ENCODE measurements at regions of chr9 and their contacts with region 1.

Region 1: DNA sequence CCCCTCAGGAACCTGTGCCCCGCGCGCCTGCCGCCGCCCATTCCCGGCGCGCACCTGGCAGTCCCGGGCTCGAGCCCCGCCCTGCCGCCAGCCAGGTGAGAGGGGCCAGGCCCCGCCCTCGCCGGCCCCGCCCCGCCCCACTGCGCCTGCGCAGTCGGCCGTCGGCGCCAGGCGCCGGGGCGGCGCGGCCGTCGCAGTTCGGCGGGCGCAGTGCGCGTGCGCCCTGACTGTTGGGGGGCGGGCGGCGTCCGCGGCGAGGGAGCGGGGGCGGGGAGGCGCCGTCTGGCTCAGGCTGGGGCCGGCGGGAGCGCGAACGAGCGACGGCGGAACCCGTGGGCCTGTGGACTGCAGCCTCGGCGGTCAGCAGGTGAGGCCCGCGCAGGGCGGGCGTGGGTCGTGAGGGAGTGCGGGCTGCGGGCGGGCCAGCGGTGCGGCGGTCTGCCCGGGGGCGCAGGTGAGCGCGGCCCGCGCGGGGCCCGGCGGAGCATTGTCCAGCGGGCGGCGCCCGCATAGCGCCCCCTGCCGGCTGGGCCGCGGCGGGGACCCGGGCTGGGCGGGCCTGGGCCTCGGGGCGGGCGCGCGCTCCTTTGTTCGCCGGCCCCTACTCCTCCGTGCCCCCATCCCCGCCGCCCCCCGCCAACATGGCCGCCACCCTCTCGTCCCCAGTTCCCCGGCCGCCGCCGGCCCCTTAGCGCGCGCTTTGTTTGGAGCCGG is at the start of gene SPIN1:
- DNase-seq: peak; percentile 88
- H3K4me3 ChIP-seq: peak within 1 kb of the TSS; percentile 54 to 97 (median 96)
- H3K27ac ChIP-seq: peak within 1 kb of the TSS; percentile 87 to 96 (median 95)
- H3K4me1 ChIP-seq: peaks cover 0 to 38% (median 28%) of the 10 kb centered on the region in 4 donors
- H3K27me3 ChIP-seq: no peaks in the 10 kb centered on the region
- CTCF ChIP-seq: peak in 1 of 4 experiments; percentile 46
- EP300 ChIP-seq: no peak
- POLR2A ChIP-seq: no peak
- total RNA-seq, gene SPIN1: 79.2 to 102 (median 83.1) TPM

Region 2: DNA sequence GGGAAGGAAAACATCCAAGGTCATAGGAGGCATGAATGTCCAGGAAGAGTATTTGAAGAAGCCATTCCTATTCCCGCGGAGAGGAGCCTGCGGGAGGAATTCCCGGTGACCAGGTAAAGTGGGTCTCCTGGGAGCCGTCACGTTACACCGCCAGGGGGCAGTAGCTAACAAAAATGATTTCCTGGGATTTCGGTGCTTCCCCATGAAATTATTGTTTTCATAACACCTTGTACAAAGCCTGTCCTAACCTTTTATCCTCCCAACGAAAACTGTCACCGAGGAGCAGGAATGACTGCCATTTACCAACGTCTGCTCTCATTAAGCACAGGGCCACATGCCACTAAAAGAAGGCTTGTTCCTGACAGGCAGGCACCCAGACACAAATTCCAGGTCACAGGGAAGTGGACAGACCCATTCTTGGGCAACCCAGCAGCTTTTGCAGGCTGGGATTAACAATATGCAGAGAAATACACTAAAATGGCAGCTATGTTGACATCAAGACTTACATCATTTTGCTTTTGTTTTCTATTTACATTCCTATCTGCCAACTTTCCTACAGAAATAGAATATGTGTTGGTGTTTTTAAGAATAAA is 703.6 kb before region 1 on chr9:
- intact Hi-C with region 1: loop called (anchors 5 kb)
- DNase-seq: no peak
- H3K4me3 ChIP-seq: no peak overlapping the region
- H3K27ac ChIP-seq: peak overlapping the region in 2 of 4 donors; percentile 59 to 66
- H3K4me1 ChIP-seq: peaks cover 0 to 34% (median 29%) of the 10 kb centered on the region in 4 donors
- H3K27me3 ChIP-seq: no peaks in the 10 kb centered on the region
- CTCF ChIP-seq: peak; percentile 24 to 73 (median 60)
- EP300 ChIP-seq: no peak
- POLR2A ChIP-seq: no peak

Region 3: DNA sequence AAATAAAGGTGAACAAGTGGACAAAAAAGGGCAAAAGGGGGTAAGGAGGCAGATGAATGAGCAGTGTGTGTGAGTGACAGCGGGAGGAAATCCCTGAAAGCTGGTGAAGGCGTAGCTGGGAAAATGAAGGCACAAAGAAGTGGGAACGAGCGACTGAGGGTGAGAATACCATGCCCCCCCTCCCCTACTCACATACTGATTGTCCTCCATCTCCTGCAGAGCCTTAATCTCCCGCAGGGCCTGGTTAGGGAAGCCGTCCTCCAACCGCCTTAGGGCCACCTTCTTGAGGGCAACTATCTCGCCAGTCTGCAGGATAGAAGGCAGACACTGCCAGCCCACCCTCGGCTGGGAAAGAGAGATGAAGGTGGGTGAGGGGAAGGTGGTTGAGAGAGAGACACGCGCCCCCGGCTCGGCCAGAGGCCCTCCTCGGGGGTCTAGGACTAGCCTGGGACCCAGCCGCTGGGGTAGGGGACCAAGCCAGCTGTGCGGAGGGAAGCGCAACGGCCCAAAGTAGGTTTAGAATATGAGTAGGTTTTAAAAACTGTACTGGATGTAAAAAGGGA is 414.5 kb before region 1 on chr9:
- intact Hi-C with region 1: loop called (anchors 10 kb)
- DNase-seq: no peak
- H3K4me3 ChIP-seq: peak overlapping the region; percentile 45 to 68 (median 60)
- H3K27ac ChIP-seq: peak overlapping the region; percentile 72 to 84 (median 76)
- H3K4me1 ChIP-seq: peaks cover 0 to 21% (median 11%) of the 10 kb centered on the region in 4 donors
- H3K27me3 ChIP-seq: no peaks in the 10 kb centered on the region
- CTCF ChIP-seq: no peak
- EP300 ChIP-seq: no peak
- POLR2A ChIP-seq: no peak

Region 4: GRCh38 chr9:88106491-88106890 is 281.8 kb before region 1 on chr9:
- intact Hi-C with region 1: loop called (anchors 5 kb)
- DNase-seq: no peak
- H3K4me3 ChIP-seq: no peak overlapping the region
- H3K27ac ChIP-seq: no peak overlapping the region
- H3K4me1 ChIP-seq: no peaks in the 10 kb centered on the region
- H3K27me3 ChIP-seq: no peaks in the 10 kb centered on the region
- CTCF ChIP-seq: peak in 3 of 4 experiments; percentile 59 to 65 (median 62)
- EP300 ChIP-seq: no peak
- POLR2A ChIP-seq: no peak

Region 5: GRCh38 chr9:88534456-88535261 is 146.3 kb after region 1 on chr9 and contains the start of gene NXNL2:
- intact Hi-C with region 1: loop called (anchors 5 kb)
- DNase-seq: peak; percentile 91
- H3K4me3 ChIP-seq: peak within 1 kb of the TSS; percentile 40 to 58 (median 54)
- H3K27ac ChIP-seq: peak within 1 kb of the TSS; percentile 73 to 87 (median 75)
- H3K4me1 ChIP-seq: peaks cover 0 to 30% (median 22%) of the 10 kb centered on the region in 4 donors
- H3K27me3 ChIP-seq: peaks cover 7 to 12% (median 8%) of the 10 kb centered on the region in 3 donors
- CTCF ChIP-seq: no peak
- EP300 ChIP-seq: no peak
- POLR2A ChIP-seq: no peak
- total RNA-seq, gene NXNL2: 0.54 TPM in 1 of 4 donors, not detected in the others